SK-N-SH (cell line): ENCODE measurements at regions of chr5 and their contacts with region 1.

Region 1: DNA sequence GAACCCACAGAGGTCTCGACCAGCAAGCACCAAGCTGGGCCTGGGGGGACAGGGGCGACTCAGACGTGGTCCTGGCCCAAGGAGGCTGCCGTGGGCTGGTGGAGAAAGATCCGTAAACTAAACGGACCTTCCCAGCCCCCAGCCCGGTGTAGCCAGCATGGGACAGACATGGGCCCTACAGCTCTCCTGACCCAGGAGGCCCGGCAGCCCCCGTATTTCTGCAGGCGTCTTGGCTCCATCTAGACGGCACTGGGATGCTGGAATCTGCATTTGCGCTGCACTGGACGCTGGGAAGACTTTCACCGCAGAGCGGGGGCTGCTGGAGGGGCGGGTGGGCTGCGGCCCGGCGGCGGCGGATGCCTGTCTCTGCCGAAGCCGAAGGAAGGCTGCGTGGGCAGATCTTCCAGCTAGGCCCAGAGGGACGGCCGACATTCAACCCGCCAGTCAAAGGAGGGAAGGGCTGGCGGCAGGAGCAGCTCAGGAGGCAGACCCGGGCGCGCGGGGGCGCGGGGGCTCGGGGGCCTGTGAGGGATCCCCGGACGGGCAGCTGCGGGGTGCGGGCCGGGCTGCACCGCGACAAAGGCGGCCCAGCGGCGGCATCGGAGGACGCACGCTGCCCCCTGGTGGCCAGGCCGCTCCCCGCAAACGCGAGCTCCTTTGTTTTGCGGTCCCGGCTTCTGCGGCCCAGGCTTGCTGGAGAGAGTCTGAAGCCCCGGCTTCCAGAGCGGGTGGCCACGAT is 266.2 kb downstream of the NSG2 start:
- DNase-seq: peak; percentile 95
- H3K4me3 ChIP-seq: peak overlapping the region; percentile 39 to 62
- H3K27ac ChIP-seq: peak overlapping the region in 1 of 2 experiments; percentile 84; a peak in 2 of 4 replicates
- H3K4me1 ChIP-seq: peaks cover 0 to 38% of the 10 kb centered on the region in 2 experiments; a peak in 1 of 4 replicates
- H3K27me3 ChIP-seq: no peaks in the 10 kb centered on the region
- CTCF ChIP-seq: peak; percentile 77
- EP300 ChIP-seq: no peak; a peak in 1 of 4 replicates
- RAD21 ChIP-seq: peak; percentile 88

Region 2: DNA sequence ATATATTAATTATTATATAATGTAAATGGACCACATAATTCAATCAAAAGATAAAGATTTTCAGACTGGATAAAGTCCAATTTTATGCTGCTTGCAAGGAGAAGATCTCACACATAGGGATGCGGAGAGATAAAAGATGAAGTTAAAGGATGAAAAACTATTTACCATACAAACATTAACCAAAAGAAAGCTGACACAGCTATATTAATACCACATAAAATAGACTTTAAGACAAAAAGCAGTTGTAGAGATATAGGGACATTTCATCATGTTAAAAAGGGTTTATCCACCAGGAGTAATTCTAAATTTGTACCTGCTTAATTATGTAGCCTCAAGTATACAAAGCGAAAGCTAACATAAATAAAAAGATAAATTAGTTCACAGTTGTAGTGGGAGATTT is 281.4 kb before region 1 on chr5:
- CTCF ChIA-PET with region 1: interaction called, 25 read pairs
- POLR2A ChIA-PET with region 1: no interaction called
- DNase-seq: no peak
- H3K4me3 ChIP-seq: no peak overlapping the region
- H3K27ac ChIP-seq: no peak overlapping the region
- H3K4me1 ChIP-seq: no peaks in the 10 kb centered on the region
- H3K27me3 ChIP-seq: no peaks in the 10 kb centered on the region
- CTCF ChIP-seq: no peak
- EP300 ChIP-seq: no peak
- RAD21 ChIP-seq: no peak

Region 3: DNA sequence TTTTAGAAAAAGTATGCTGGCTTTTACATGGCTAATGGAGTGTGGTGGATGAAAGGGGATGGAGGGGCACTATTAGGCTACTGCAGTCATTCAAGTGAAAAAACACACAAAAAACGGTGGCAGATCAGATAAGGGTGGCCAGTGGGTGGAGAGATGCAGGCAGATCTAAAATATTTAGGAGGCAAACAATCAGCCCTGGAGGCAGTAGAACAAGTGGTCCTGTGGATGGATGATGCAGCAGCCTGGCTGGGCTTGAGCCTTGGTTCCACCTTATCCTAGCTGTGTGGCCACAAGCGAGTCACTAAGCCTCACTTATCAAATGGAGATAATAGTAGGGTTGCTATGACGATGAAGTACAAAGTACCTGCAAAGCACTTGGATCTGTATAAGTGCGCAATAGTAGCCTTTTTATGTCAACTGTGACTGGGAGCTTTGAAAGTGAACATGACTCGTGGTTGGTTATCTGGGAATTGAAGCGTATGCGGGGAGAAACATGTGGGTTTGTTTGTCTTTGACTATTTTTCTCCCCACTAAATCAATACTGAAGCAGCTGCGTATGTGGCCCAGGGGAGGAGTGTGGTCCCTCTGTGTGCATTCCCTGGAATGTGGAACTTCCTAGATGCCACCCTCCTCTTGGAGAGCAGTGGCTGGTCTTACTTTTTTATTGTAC is 246.0 kb before region 1 on chr5:
- CTCF ChIA-PET with region 1: interaction called, 12 read pairs
- POLR2A ChIA-PET with region 1: interaction called, 3 read pairs
- DNase-seq: peak; percentile 63
- H3K4me3 ChIP-seq: no peak overlapping the region
- H3K27ac ChIP-seq: peak overlapping the region in 1 of 2 experiments; percentile 75; a peak in 2 of 4 replicates
- H3K4me1 ChIP-seq: peaks cover 0 to 32% of the 10 kb centered on the region in 2 experiments; a peak in 2 of 4 replicates
- H3K27me3 ChIP-seq: no peaks in the 10 kb centered on the region
- CTCF ChIP-seq: no peak
- EP300 ChIP-seq: no peak
- RAD21 ChIP-seq: no peak

Region 4: GRCh38 chr5:174119468-174119881 is 192.2 kb before region 1 on chr5:
- CTCF ChIA-PET with region 1: interaction called, 15 read pairs
- POLR2A ChIA-PET with region 1: interaction called, 9 read pairs
- DNase-seq: no peak
- H3K4me3 ChIP-seq: no peak overlapping the region
- H3K27ac ChIP-seq: peak overlapping the region in 1 of 2 experiments; percentile 85; a peak in 2 of 4 replicates
- H3K4me1 ChIP-seq: peaks cover 0 to 21% of the 10 kb centered on the region in 2 experiments; a peak in 2 of 4 replicates
- H3K27me3 ChIP-seq: no peaks in the 10 kb centered on the region
- CTCF ChIP-seq: no peak
- EP300 ChIP-seq: no peak
- RAD21 ChIP-seq: no peak

Region 5: DNA sequence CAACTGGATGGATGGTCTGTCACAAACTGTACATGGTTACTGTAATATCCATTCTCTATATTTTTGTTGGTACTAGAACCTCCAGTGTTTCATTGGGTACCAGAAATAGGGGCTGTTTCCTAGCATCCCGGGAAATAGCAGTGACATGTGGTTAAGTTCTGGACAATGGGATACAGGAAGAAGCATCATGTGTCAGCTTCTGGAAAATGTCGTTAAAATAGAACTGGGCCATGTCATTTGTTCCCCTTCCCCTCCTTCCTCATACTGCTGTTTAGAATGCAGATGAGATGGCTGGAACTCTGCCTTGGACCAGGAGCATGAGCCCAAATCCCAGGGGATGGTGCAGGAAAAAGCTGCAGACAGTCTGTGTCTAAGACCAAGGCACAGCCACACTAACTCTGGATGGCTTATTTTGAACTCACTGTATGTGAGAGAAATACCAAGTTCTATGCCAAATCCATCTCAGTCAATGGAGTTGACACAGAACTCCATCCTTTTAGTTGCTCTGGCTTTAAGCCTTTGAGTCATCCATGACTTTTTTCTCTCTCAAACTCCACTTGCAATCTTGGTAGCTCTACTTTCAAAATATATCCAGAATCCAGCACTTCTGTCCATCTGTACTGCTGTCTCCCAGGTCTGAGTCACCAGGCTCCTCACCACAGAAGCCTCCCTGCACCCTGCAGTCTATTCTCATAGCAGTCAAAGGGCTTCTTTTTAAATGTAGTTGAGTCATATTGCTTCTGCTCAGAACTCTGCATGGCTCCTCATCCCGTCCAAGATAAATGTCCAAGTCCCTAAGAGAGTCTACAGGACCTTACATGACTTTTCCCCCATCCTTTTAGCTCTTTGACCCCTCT is 82.0 kb before region 1 on chr5:
- CTCF ChIA-PET with region 1: interaction called, 29 read pairs
- POLR2A ChIA-PET with region 1: no interaction called
- DNase-seq: no peak
- H3K4me3 ChIP-seq: no peak overlapping the region
- H3K27ac ChIP-seq: peak overlapping the region; percentile 3 to 50
- H3K4me1 ChIP-seq: peaks cover 0 to 23% of the 10 kb centered on the region in 2 experiments; a peak in 2 of 4 replicates
- H3K27me3 ChIP-seq: no peaks in the 10 kb centered on the region
- CTCF ChIP-seq: no peak
- EP300 ChIP-seq: no peak
- RAD21 ChIP-seq: no peak

Region 6: GRCh38 chr5:174300941-174301761 is 10.5 kb before region 1 on chr5:
- CTCF ChIA-PET with region 1: interaction called, 29 read pairs
- POLR2A ChIA-PET with region 1: no interaction called
- DNase-seq: peak; percentile 41
- H3K4me3 ChIP-seq: no peak overlapping the region
- H3K27ac ChIP-seq: peak overlapping the region in 1 of 2 experiments; percentile 47; a peak in 2 of 4 replicates
- H3K4me1 ChIP-seq: peaks cover 0 to 21% of the 10 kb centered on the region in 2 experiments; a peak in 2 of 4 replicates
- H3K27me3 ChIP-seq: no peaks in the 10 kb centered on the region
- CTCF ChIP-seq: no peak
- EP300 ChIP-seq: no peak
- RAD21 ChIP-seq: no peak

Region 7: GRCh38 chr5:174348311-174348981 is 36.7 kb after region 1 on chr5:
- CTCF ChIA-PET with region 1: no interaction called
- POLR2A ChIA-PET with region 1: no interaction called
- DNase-seq: no peak
- H3K4me3 ChIP-seq: no peak overlapping the region
- H3K27ac ChIP-seq: peak overlapping the region in 1 of 2 experiments; percentile 34; a peak in 1 of 4 replicates
- H3K4me1 ChIP-seq: no peaks in the 10 kb centered on the region
- H3K27me3 ChIP-seq: no peaks in the 10 kb centered on the region
- CTCF ChIP-seq: no peak
- EP300 ChIP-seq: no peak
- RAD21 ChIP-seq: no peak